GM10248 (cell line): ENCODE measurements at regions of chr3 and their contacts with region 1.

Region 1: GRCh38 chr3:65732051-65732935 is 306.4 kb downstream of the MAGI1 start:
- DNase-seq: peak; percentile 53
- CTCF ChIP-seq: peak; percentile 75

Region 2: GRCh38 chr3:65713016-65713415 is 19.3 kb before region 1 on chr3:
- CTCF ChIA-PET with region 1: interaction called, 17 read pairs
- POLR2A ChIA-PET with region 1: no interaction called
- DNase-seq: no peak
- CTCF ChIP-seq: no peak

Region 3: DNA sequence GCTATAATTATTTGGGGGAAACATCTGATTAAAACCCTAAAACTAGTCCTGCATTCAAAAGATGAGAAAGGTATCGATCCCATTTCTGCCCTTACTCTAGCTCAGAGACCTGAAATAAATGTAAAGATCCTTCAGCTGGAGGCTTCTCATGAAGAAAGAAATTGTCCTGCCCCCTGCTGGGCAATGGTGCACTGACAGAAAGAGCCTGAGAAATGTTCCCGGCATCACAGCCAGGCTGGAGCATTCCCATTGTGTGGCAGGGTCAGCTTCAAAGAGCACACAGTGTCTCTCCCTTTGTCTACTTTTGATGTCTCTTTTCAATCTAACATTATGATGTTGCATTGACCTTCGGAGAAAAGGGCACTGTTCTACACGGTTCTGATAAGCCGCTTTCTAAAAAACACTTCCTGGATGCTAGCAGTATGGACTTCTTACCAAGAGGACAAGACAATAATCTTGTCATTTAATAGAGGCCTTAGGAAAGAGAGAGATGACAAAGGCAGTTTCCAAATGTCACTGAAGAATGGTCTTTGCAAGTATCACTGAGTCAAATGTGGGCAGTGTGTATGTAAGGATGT is 18.9 kb after region 1 on chr3:
- CTCF ChIA-PET with region 1: interaction called, 10 read pairs
- POLR2A ChIA-PET with region 1: no interaction called
- DNase-seq: peak; percentile 17
- CTCF ChIP-seq: peak; percentile 45